ENCODE measurements at regions of chr10 and their contacts with region 1.

Region 1: DNA sequence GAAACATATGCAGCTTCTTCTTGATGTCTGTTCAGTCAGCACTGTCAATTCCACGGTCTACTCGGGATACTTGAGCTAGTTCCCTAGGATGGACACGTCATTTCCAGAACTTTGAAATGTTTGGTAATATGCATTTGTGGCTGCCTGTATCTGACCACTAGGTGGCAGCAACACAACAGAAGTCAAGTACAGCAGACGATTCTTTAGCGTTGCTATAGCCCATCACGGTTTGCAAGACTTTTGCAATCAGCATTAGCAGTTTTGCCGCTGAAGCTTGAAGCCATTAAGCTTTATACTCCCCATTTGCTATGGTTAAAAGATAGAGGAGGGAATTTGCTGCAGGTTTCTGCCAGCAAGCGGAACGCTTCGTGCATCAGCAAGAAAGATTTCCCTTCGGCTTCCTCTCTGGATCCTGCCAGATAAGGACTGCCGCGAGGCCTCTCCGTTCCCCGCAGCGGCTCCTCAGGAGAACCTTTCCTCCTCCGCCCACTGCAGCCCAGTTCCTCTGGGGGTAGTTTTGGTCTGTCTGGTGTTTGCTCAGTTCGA is 63.5 kb downstream of the ABCC2 start:
- DNase-seq: peak; percentile 38 to 80 (median 44)
- ATAC-seq: peak; percentile 94
- H3K4me3 ChIP-seq: no peak overlapping the region
- H3K27ac ChIP-seq: no peak overlapping the region
- H3K4me1 ChIP-seq: no peaks in the 10 kb centered on the region
- H3K27me3 ChIP-seq: peaks cover 10 to 40% of the 10 kb centered on the region in 2 experiments; a peak in 4 of 5 replicates
- CTCF ChIP-seq: peak; percentile 72 to 87 (median 82)
- EP300 ChIP-seq: no peak
- POLR2A ChIP-seq: no peak
- RAD21 ChIP-seq: peak; percentile 84 to 90

Region 2: GRCh38 chr10:100046021-100046486 is 200.1 kb after region 1 on chr10:
- CTCF ChIA-PET with region 1: interaction called, 23 read pairs
- POLR2A ChIA-PET with region 1: no interaction called
- in situ Hi-C with region 1: loop called (anchors 5 kb)
- intact Hi-C with region 1: loop called (anchors 1 kb)
- DNase-seq: peak; percentile 55 to 77 (median 68)
- ATAC-seq: peak; percentile 96
- H3K4me3 ChIP-seq: no peak overlapping the region
- H3K27ac ChIP-seq: no peak overlapping the region
- H3K4me1 ChIP-seq: no peaks in the 10 kb centered on the region
- H3K27me3 ChIP-seq: peaks cover 0 to 6% of the 10 kb centered on the region in 2 experiments; a peak in 2 of 5 replicates
- CTCF ChIP-seq: peak; percentile 77 to 80 (median 79)
- EP300 ChIP-seq: no peak
- POLR2A ChIP-seq: no peak
- RAD21 ChIP-seq: peak; percentile 77 to 85

Region 3: GRCh38 chr10:100239851-100240250 is 393.9 kb after region 1 on chr10:
- CTCF ChIA-PET with region 1: interaction called, 3 read pairs
- POLR2A ChIA-PET with region 1: no interaction called
- in situ Hi-C with region 1: no loop called
- intact Hi-C with region 1: loop called (anchors 5 kb)
- DNase-seq: no peak
- ATAC-seq: no peak
- H3K4me3 ChIP-seq: no peak overlapping the region
- H3K27ac ChIP-seq: no peak overlapping the region
- H3K4me1 ChIP-seq: no peaks in the 10 kb centered on the region
- H3K27me3 ChIP-seq: no peaks in the 10 kb centered on the region
- CTCF ChIP-seq: no peak
- EP300 ChIP-seq: no peak
- POLR2A ChIP-seq: no peak
- RAD21 ChIP-seq: no peak

Region 4: DNA sequence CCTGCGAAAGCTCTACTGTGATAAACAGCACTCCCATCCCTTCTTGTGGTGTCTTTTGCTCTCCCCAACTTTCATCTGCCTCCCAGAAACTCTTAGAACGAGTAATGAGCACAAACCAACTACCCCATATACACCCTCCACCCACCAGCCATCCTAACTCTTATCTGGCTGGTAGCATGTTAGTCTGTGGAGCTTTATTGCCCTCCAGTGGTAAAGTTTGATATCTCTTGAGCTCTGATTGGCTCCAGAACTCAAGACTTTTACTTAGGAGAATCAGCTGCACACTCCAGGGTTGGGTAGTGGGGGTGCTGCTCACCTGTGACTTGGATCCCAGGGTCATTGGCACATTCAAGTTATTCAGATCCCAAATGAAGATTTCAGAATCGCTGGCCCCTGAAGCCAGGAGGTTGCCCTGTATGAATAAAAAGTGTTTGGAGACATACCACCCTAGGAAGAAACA is 662.8 kb after region 1 on chr10:
- CTCF ChIA-PET with region 1: no interaction called
- POLR2A ChIA-PET with region 1: no interaction called
- in situ Hi-C with region 1: loop called (anchors 10 kb)
- intact Hi-C with region 1: no loop called
- DNase-seq: peak; percentile 48 to 65 (median 62)
- ATAC-seq: peak; percentile 98
- H3K4me3 ChIP-seq: no peak overlapping the region
- H3K27ac ChIP-seq: no peak overlapping the region
- H3K4me1 ChIP-seq: peaks cover 0 to 4% of the 10 kb centered on the region in 2 experiments; a peak in 2 of 5 replicates
- H3K27me3 ChIP-seq: no peaks in the 10 kb centered on the region
- CTCF ChIP-seq: peak; percentile 67 to 78 (median 74)
- EP300 ChIP-seq: no peak
- POLR2A ChIP-seq: no peak
- RAD21 ChIP-seq: peak; percentile 65 to 80